Esophagus muscularis mucosa (tissue), 4 donors: ENCODE measurements at regions of chr10 and their contacts with region 1.

Region 1: DNA sequence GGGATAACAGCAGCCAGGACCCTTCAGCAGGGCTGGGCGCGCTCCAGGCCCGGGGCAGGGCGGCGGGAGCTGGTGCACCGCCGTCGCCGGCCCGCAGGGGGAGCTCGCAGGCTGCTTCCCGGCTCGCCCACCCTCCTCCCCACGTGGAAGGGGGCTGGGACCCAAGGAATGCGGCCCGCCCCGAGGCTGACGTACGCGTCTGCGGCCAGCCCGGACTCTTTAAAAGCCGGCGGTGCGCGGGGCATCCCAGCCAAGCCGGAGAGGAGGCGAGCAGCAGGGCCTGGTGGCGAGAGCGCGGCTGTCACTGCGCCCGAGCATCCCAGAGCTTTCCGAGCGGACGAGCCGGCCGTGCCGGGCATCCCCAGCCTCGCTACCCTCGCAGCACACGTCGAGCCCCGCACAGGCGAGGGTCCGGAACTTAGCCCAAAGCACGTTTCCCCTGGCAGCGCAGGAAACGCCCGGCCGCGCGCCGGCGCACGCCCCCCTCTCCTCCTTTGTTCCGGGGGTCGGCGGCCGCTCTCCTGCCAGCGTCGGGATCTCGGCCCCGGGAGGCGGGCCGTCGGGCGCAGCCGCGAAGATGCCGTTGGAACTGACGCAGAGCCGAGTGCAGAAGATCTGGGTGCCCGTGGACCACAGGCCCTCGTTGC is at the start of gene PFKFB3:
- DNase-seq: peak; percentile 99
- H3K4me3 ChIP-seq: peak within 1 kb of the TSS; percentile 84 to 89 (median 86)
- H3K27ac ChIP-seq: peak within 1 kb of the TSS; percentile 94 to 99 (median 98)
- H3K4me1 ChIP-seq: peaks cover 38 to 65% (median 63%) of the 10 kb centered on the region in 4 donors
- H3K27me3 ChIP-seq: no peaks in the 10 kb centered on the region
- CTCF ChIP-seq: peak in 2 of 3 experiments; percentile 98 to 100
- EP300 ChIP-seq: no peak
- POLR2A ChIP-seq: peak; percentile 99
- total RNA-seq, gene PFKFB3: 22.4 to 49.1 (median 37.9) TPM

Region 2: DNA sequence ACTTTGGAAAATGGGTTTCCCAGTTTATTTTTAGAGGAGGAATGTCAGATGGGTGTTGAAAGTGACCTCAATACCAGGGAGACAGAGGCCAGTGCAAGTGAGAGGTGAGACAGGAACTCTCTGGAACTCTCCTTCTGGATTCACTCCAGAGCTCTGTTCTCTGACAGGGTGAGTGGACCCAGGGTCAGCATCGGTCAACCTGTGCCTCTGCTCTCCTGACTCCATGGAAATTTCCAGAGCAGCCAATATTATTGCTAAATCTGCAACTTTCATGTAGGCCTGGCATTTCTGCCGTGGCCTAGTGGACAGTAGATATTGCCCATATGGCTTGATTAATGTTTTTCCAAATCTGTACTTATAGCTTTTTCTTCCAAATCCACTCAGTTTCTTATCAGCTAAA is 986.0 kb before region 1 on chr10:
- intact Hi-C with region 1: no loop called
- DNase-seq: no peak
- H3K4me3 ChIP-seq: no peak overlapping the region
- H3K27ac ChIP-seq: no peak overlapping the region
- H3K4me1 ChIP-seq: no peaks in the 10 kb centered on the region
- H3K27me3 ChIP-seq: no peaks in the 10 kb centered on the region
- CTCF ChIP-seq: no peak
- EP300 ChIP-seq: no peak
- POLR2A ChIP-seq: no peak

Region 3: DNA sequence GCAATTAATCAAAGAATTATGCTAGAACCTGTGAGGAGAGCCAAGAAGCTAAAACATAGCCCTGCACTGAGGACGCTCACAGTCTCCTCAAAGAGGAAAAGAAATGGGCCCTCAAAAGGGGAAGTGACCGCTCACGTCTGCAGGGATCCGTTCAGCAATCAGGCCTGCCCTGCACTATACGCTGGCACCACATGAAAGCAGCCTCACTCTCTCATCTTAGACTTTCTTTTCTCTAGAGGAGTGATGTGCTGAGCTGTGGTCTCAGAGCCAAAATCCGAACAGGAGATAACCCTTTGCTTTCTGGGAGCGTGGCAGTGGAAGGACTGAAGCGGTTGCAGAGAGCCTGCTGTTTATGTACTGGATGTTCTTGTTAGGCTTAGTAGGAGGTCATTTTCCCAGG is 134.4 kb before region 1 on chr10:
- intact Hi-C with region 1: no loop called
- DNase-seq: no peak
- H3K4me3 ChIP-seq: no peak overlapping the region
- H3K27ac ChIP-seq: no peak overlapping the region
- H3K4me1 ChIP-seq: peaks cover 0 to 28% (median 6%) of the 10 kb centered on the region in 4 donors
- H3K27me3 ChIP-seq: no peaks in the 10 kb centered on the region
- CTCF ChIP-seq: no peak
- EP300 ChIP-seq: no peak
- POLR2A ChIP-seq: no peak

Region 4: GRCh38 chr10:6088721-6089390 is 114.0 kb before region 1 on chr10 and contains the start of gene RBM17:
- intact Hi-C with region 1: loop called (anchors 5 kb)
- DNase-seq: peak; percentile 99
- H3K4me3 ChIP-seq: peak within 1 kb of the TSS; percentile 93 to 99 (median 99)
- H3K27ac ChIP-seq: peak within 1 kb of the TSS; percentile 88 to 95 (median 90)
- H3K4me1 ChIP-seq: peaks cover 50 to 60% (median 56%) of the 10 kb centered on the region in 4 donors
- H3K27me3 ChIP-seq: peaks cover 0 to 5% (median 0%) of the 10 kb centered on the region in 4 donors
- CTCF ChIP-seq: peak in 2 of 3 experiments; percentile 100
- EP300 ChIP-seq: no peak
- POLR2A ChIP-seq: no peak
- total RNA-seq, gene RBM17: 48.5 to 72.9 (median 59.5) TPM

Region 5: DNA sequence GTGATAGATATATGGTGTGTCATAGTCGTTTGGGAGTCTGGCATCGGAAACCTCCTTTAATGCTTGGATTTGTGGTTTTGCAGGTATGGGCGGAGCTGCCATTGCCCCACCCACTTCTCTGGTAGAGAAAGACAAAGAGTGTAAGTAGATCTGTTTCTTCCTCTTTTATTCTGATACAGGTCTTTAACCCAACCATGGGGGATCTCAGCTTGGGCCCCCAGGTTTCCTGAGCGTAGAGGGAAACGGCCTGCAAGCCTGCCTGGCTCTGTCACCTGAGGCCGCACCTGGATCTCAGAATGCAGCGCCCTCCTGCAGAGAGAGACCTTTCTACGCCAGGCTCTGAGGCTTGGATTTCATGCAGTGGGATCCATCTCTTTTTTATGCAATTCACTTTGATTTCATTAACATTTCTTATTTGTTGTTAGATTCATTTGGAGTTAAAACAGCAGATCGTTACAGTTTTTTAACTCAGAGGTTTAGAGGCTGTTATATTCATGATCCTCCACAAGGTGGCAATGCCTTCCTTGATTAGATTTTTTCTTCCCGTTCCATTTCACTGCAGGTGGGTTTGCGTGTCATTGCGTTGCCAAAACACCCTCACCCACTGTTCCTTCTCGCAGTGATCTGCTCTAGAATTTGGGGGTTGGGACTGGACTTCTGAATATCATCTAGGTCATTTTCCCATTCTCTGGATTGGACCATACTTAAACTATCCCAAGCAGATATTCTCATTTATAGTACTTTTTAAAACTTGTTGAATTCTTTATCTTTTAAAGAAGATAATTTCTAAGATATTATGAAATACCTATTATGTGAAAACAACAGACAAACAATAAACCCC is 94.0 kb before region 1 on chr10:
- intact Hi-C with region 1: loop called (anchors 2 kb)
- DNase-seq: no peak
- H3K4me3 ChIP-seq: no peak overlapping the region
- H3K27ac ChIP-seq: no peak overlapping the region
- H3K4me1 ChIP-seq: peaks cover 0 to 7% (median 5%) of the 10 kb centered on the region in 4 donors
- H3K27me3 ChIP-seq: no peaks in the 10 kb centered on the region
- CTCF ChIP-seq: peak; percentile 64 to 80 (median 74)
- EP300 ChIP-seq: no peak
- POLR2A ChIP-seq: no peak

Region 6: DNA sequence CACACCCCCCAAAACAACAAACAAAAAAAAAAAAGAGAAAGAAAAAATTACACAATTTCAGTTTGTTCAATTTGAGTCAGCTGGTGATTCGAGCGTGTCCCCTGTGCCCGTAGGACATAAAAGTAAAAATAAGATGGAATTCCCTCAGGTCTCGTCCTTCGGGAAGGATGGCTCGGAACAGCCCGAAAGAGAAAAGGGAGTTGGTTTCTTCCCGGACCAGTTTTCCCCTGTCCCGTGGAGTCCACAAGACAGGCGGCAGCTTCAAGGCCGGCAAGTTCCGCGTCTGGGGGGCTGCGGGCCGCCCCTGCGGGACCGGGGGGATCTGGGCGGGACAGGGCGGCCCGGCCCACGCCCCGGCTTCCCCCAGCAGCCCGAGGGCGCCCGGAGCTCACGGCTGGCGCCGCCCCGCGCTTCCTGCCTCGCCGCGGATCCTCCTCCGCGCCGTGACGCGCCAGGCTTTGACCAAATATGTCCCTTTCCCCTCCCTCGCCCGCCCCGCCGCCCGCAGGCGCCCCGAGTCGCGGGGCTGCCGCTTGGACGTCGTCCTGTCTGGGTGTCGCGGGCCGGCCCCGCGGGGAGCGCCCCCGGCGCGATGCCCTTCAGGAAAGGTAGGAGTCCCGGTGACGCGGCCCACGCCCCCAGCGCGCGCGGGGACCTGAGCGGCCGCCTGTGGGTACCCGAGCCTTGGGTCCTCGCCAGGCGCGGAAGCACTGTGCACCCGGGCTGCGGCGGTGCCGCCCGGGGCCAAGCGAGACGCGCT is 58.2 kb before region 1 on chr10:
- intact Hi-C with region 1: loop called (anchors 2 kb)
- DNase-seq: peak; percentile 96
- H3K4me3 ChIP-seq: peak overlapping the region; percentile 75 to 82 (median 80)
- H3K27ac ChIP-seq: peak overlapping the region; percentile 85 to 91 (median 88)
- H3K4me1 ChIP-seq: peaks cover 8 to 35% (median 28%) of the 10 kb centered on the region in 4 donors
- H3K27me3 ChIP-seq: peaks cover 0 to 13% (median 0%) of the 10 kb centered on the region in 4 donors
- CTCF ChIP-seq: peak in 2 of 3 experiments; percentile 35 to 46
- EP300 ChIP-seq: no peak
- POLR2A ChIP-seq: peak; percentile 68

Region 7: GRCh38 chr10:6163364-6164270 is 39.2 kb before region 1 on chr10:
- intact Hi-C with region 1: loop called (anchors 2 kb)
- DNase-seq: no peak
- H3K4me3 ChIP-seq: peak overlapping the region; percentile 74 to 84 (median 80)
- H3K27ac ChIP-seq: peak overlapping the region; percentile 92 to 97 (median 95)
- H3K4me1 ChIP-seq: peaks cover 30 to 62% (median 48%) of the 10 kb centered on the region in 4 donors
- H3K27me3 ChIP-seq: no peaks in the 10 kb centered on the region
- CTCF ChIP-seq: peak in 1 of 3 experiments; percentile 14
- EP300 ChIP-seq: no peak
- POLR2A ChIP-seq: peak; percentile 64

Region 8: GRCh38 chr10:6280291-6280690 is 77.5 kb after region 1 on chr10:
- intact Hi-C with region 1: no loop called
- DNase-seq: no peak
- H3K4me3 ChIP-seq: no peak overlapping the region
- H3K27ac ChIP-seq: no peak overlapping the region
- H3K4me1 ChIP-seq: peaks cover 0 to 6% (median 4%) of the 10 kb centered on the region in 4 donors
- H3K27me3 ChIP-seq: no peaks in the 10 kb centered on the region
- CTCF ChIP-seq: no peak
- EP300 ChIP-seq: no peak
- POLR2A ChIP-seq: no peak

Region 9: GRCh38 chr10:6401562-6402348 is 198.9 kb after region 1 on chr10:
- intact Hi-C with region 1: loop called (anchors 2 kb)
- DNase-seq: no peak
- H3K4me3 ChIP-seq: peak overlapping the region; percentile 46 to 50 (median 46)
- H3K27ac ChIP-seq: peak overlapping the region; percentile 32 to 72 (median 38)
- H3K4me1 ChIP-seq: peaks cover 2 to 25% (median 22%) of the 10 kb centered on the region in 4 donors
- H3K27me3 ChIP-seq: no peaks in the 10 kb centered on the region
- CTCF ChIP-seq: peak; percentile 76 to 89 (median 80)
- EP300 ChIP-seq: no peak
- POLR2A ChIP-seq: no peak